Sigmoid colon (tissue), 7 donors: ENCODE measurements at regions of chr7 and their contacts with region 1.

Region 1: DNA sequence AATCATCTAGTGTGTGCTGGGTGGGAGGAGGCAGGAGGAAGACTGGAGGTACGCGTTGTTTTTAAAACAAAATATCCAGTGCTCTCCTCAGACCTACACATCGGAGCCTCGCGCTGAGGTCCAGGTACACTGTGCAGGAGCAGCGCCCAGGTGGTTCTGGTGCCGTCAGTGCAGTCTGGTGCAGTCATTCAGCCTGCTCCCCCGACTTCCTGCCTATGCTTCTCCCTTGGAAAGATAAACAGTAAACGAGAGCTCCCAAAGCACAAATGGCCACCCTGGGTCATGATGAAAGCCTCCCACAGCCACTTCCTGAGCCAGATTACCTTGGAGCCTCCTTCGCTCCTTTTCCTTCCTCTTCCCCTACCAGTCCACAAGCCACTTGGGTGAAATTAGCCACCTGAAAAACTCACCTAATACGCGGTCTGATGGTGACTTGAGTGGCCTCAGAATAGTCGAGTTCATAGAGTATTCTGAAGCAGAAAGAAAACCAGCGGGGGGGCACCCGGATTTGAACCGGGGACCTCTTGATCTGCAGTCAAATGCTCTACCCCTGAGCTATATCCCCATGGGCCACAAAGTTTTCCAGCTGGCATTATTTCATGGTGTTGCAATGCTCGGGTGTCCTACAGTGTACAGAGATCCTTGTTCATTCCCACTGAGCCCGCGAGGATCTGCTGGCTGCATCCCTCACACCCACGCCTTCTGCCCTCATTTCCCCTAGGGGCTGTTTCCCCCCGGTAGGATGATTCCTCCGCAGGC is 82.5 kb downstream of the ZNF467 start:
- DNase-seq: peak; percentile 69
- H3K4me3 ChIP-seq: no peak overlapping the region
- H3K27ac ChIP-seq: peak overlapping the region in 1 of 4 donors; percentile 47
- H3K4me1 ChIP-seq: peaks cover 0 to 26% (median 15%) of the 10 kb centered on the region in 4 donors
- H3K27me3 ChIP-seq: peaks cover 0 to 28% (median 7%) of the 10 kb centered on the region in 3 donors
- CTCF ChIP-seq: no peak
- EP300 ChIP-seq: no peak
- POLR2A ChIP-seq: no peak

Region 2: DNA sequence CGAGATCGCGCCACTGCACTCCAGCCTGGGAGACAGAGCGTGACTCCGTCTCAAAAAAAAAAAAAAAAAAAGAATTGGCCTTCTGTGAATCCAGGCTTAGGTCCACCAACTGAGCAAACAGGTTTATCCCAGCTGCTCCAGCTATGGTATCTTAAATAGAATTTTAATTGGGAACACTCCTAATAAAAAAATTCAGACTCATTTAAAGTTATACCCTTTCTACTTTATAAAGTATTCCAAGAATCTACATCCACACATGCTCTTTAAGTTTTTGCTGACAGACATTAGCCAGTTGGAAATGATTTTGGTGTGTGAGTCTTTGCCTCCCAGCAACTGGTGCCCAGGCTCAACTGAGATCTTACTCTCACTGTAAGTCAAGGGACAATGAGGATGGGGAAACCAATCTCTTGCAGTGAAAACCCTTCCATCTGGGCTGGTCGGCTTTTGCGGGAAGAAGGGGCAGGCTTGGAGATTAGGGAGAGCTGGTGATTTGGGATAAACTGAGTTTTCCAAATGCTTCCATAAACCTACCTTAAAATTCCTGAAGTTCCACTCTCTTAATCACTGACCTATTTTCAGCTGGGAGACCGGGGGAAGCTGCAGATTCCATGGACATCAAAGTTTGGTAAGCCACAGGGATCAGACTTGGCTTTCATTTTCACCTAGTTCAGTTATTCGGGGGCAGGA is 104.1 kb before region 1 on chr7:
- intact Hi-C with region 1: no loop called
- DNase-seq: no peak
- H3K4me3 ChIP-seq: no peak overlapping the region
- H3K27ac ChIP-seq: no peak overlapping the region
- H3K4me1 ChIP-seq: no peaks in the 10 kb centered on the region
- H3K27me3 ChIP-seq: no peaks in the 10 kb centered on the region
- CTCF ChIP-seq: no peak
- EP300 ChIP-seq: no peak
- POLR2A ChIP-seq: no peak

Region 3: GRCh38 chr7:149670288-149670687 is 20.6 kb before region 1 on chr7:
- intact Hi-C with region 1: loop called (anchors 2 kb)
- DNase-seq: peak; percentile 87
- H3K4me3 ChIP-seq: peak overlapping the region in 1 of 4 donors; percentile 5
- H3K27ac ChIP-seq: peak overlapping the region in 3 of 4 donors; percentile 58 to 70 (median 60)
- H3K4me1 ChIP-seq: peaks cover 0 to 14% (median 5%) of the 10 kb centered on the region in 4 donors
- H3K27me3 ChIP-seq: no peaks in the 10 kb centered on the region
- CTCF ChIP-seq: no peak
- EP300 ChIP-seq: no peak
- POLR2A ChIP-seq: no peak